PC-9 (cell line): ENCODE measurements at regions of chr15 and their contacts with region 1.

Region 1: DNA sequence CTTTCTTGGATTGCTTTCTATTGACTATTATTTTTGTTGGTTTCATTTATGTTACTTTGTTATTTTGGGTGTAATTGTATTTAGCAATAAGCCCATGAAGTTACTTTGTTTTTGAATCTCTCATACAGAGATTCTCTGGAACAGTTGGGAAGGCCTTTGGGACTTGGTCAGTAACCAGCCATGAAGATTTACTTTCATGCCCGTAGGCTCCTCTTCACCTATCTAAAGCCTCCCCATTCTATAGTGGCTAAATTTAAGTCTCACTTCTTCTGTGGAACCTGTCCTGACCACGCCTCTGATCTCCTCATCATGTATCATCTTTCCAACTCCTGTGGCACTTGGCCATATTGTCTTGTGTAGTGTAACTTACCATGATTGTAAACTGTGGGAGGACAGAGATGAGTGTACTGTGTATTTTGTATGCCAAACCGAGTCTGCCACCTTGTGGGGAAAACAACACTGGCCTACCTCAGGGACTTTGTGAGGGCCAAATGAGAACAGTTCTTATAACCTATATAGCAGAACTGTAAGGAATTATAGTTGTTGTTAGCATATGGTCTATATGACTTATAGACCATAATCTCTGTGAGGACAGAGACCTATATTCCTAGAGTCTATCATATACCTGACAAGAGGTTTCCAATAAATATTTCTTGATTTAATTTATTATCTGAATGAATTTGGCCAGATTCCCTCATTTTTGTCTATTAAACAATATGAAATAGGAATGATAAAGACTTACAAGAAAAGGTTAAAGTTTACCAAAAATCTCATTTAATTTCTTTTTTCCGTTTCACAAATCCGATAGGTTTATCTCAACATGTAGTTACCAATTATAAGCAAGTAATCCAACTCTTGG is 75.0 kb downstream of the STARD9 start:
- DNase-seq: peak in 1 of 2 experiments; percentile 52
- H3K4me3 ChIP-seq: no peak overlapping the region
- H3K27ac ChIP-seq: no peak overlapping the region
- H3K4me1 ChIP-seq: no peaks in the 10 kb centered on the region
- H3K27me3 ChIP-seq: no peaks in the 10 kb centered on the region
- CTCF ChIP-seq: peak; percentile 74

Region 2: GRCh38 chr15:42264795-42265194 is 385.6 kb before region 1 on chr15:
- CTCF ChIA-PET with region 1: no interaction called
- POLR2A ChIA-PET with region 1: interaction called, 10 read pairs
- intact Hi-C with region 1: no loop called
- DNase-seq: no peak
- H3K4me3 ChIP-seq: no peak overlapping the region
- H3K27ac ChIP-seq: no peak overlapping the region
- H3K4me1 ChIP-seq: no peaks in the 10 kb centered on the region
- H3K27me3 ChIP-seq: no peaks in the 10 kb centered on the region
- CTCF ChIP-seq: no peak

Region 3: GRCh38 chr15:42548253-42549031 is 102.0 kb before region 1 on chr15 and contains the starts of genes HAUS2 and LRRC57:
- CTCF ChIA-PET with region 1: no interaction called
- POLR2A ChIA-PET with region 1: no interaction called
- intact Hi-C with region 1: loop called (anchors 2 kb)
- DNase-seq: peak; percentile 65 to 86
- H3K4me3 ChIP-seq: peak within 1 kb of the TSS; percentile 87
- H3K27ac ChIP-seq: peak within 1 kb of the TSS; percentile 40
- H3K4me1 ChIP-seq: peaks cover 15% of the 10 kb centered on the region
- H3K27me3 ChIP-seq: no peaks in the 10 kb centered on the region
- CTCF ChIP-seq: no peak
- total RNA-seq, gene HAUS2: 17.7 and 23.7 TPM in 2 replicates
- total RNA-seq, gene LRRC57: 22.7 and 23.0 TPM in 2 replicates